HepG2 (cell line): ENCODE measurements at regions of chr2 and their contacts with region 1.

Region 1: DNA sequence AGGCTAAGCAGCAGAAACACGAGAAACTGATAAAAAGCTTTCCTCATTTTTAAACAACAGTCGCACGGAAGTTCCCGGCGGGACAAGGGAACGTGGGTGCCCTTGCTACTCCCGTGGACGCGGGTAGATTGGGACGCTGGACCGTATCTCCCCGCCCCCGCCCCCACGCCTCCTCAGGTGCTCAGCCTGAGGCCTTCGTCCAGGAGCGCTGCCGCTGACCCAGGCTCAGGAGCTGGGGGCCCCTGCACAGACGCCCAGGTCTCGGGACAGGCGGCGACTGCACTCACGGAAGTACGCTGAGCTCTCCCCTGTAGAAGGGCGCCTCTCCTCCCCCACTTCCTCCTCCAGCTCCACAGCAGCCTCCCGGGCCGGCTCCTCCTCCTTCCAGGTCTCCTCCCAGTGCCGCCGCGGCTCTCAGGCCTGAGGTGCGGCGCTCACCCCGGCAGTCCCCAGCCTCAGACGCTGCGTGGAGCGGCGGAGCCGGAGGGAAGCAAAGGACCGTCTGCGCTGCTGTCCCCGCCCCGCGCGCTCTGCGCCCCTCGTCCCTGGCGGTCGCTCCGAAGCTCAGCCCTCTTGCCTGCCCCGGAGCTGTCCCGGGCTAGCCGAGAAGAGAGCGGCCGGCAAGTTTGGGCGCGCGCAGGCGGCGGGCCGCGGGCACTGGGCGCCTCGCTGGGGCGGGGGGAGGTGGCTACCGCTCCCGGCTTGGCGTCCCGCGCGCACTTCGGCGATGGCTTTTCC is at the start of gene ITGAV:
- DNase-seq: peak; percentile 93
- ATAC-seq: peak; percentile 97
- H3K4me3 ChIP-seq: peak within 1 kb of the TSS; percentile 92 to 97 (median 95)
- H3K27ac ChIP-seq: peak within 1 kb of the TSS; percentile 89
- H3K4me1 ChIP-seq: peaks cover 46% of the 10 kb centered on the region
- H3K27me3 ChIP-seq: no peaks in the 10 kb centered on the region; a peak in 2 of 5 replicates
- CTCF ChIP-seq: peak; percentile 55
- EP300 ChIP-seq: 0 out of 4 replicates have a peak, but pooled peaks of 1 of the 2 experiments have one; percentile 21
- POLR2A ChIP-seq: peak; percentile 92 to 96
- RAD21 ChIP-seq: peak; percentile 73
- total RNA-seq, gene ITGAV: 35.8 and 60.4 TPM in 2 replicates

Region 2: DNA sequence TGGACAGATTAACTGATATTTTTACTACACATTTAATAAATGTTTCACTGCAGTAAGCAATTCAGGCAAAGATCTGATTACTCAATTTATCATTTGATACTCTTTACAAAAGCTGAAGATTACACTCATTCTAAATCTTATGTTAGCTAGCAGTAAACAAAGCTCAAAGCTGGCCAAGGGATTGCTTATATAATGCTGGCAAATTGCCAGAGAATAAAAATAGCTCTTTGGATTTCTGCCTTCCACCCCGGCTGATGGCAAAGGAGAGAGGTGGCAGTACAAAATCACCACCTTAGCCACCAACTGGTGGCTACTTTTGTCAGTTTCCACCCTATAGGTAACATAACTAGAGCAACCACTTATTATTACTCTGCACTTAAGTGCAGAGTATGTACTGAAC is 530.7 kb before region 1 on chr2:
- CTCF ChIA-PET with region 1: no interaction called
- POLR2A ChIA-PET with region 1: no interaction called
- in situ Hi-C with region 1: no loop called
- intact Hi-C with region 1: no loop called
- DNase-seq: no peak
- ATAC-seq: no peak
- H3K4me3 ChIP-seq: no peak overlapping the region
- H3K27ac ChIP-seq: no peak overlapping the region
- H3K4me1 ChIP-seq: no peaks in the 10 kb centered on the region
- H3K27me3 ChIP-seq: no peaks in the 10 kb centered on the region
- CTCF ChIP-seq: no peak
- EP300 ChIP-seq: no peak
- POLR2A ChIP-seq: no peak
- RAD21 ChIP-seq: no peak

Region 3: GRCh38 chr2:186485871-186486650 is 103.7 kb before region 1 on chr2 and contains the start of gene ZC3H15:
- CTCF ChIA-PET with region 1: no interaction called
- POLR2A ChIA-PET with region 1: interaction called, 48 read pairs
- in situ Hi-C with region 1: no loop called
- intact Hi-C with region 1: loop called (anchors 2 kb)
- DNase-seq: peak; percentile 98
- ATAC-seq: peak; percentile 92
- H3K4me3 ChIP-seq: peak within 1 kb of the TSS; percentile 67 to 91 (median 90)
- H3K27ac ChIP-seq: peak within 1 kb of the TSS; percentile 88
- H3K4me1 ChIP-seq: peaks cover 51% of the 10 kb centered on the region
- H3K27me3 ChIP-seq: no peaks in the 10 kb centered on the region; a peak in 1 of 5 replicates
- CTCF ChIP-seq: no peak; the same call in 1 of the 2 replicates
- EP300 ChIP-seq: 0 out of 4 replicates have a peak, but pooled peaks have one; percentile 8 to 48
- POLR2A ChIP-seq: peak; percentile 94 to 98
- RAD21 ChIP-seq: peak; percentile 60
- total RNA-seq, gene ZC3H15: 168 and 286 TPM in 2 replicates

Region 4: DNA sequence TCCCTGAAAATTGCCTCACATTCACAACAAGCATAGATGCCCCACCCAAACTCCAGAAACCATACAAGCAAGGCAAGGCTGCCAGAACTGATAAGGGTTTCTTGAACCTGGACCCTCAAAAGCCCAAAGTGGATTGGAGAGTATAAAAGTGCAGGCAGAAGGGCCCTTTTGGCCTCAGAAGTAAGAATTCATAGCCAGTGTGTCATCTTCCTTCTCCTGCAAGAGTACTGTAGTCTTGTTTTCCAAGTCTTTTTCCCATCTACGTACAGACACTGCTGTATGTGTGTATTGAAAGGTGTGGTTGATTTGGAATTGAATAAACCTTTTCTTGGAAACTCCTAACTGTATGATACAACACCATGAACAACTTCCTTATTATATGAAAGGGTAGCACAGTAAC is 56.9 kb before region 1 on chr2:
- CTCF ChIA-PET with region 1: no interaction called
- POLR2A ChIA-PET with region 1: interaction called, 25 read pairs
- in situ Hi-C with region 1: no loop called
- intact Hi-C with region 1: loop called (anchors 1 kb)
- DNase-seq: no peak
- ATAC-seq: no peak
- H3K4me3 ChIP-seq: no peak overlapping the region
- H3K27ac ChIP-seq: peak overlapping the region; percentile 47
- H3K4me1 ChIP-seq: peaks cover 52% of the 10 kb centered on the region
- H3K27me3 ChIP-seq: no peaks in the 10 kb centered on the region
- CTCF ChIP-seq: no peak
- EP300 ChIP-seq: no peak
- POLR2A ChIP-seq: no peak
- RAD21 ChIP-seq: no peak

Region 5: DNA sequence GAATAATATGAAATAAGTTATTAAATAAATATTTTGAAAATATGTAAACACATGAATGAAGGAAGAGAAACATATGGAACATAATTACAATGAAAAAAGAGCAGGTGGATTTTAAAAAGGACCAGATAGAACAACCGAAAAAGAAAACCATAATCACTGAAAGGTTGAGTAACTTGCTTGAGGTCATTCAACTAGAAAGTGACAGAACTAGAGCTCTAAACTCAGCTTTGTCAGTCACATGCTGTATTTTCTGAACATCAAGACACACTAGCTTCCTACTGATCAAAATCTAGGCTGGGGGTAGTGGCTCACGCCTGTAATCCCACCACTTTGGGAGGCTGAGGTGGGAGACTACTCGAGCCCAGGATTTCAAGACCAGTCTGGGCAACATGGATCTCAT is 29.9 kb before region 1 on chr2:
- CTCF ChIA-PET with region 1: no interaction called
- POLR2A ChIA-PET with region 1: interaction called, 24 read pairs
- in situ Hi-C with region 1: no loop called
- intact Hi-C with region 1: no loop called
- DNase-seq: no peak
- ATAC-seq: no peak
- H3K4me3 ChIP-seq: no peak overlapping the region
- H3K27ac ChIP-seq: no peak overlapping the region
- H3K4me1 ChIP-seq: peaks cover 20% of the 10 kb centered on the region
- H3K27me3 ChIP-seq: no peaks in the 10 kb centered on the region
- CTCF ChIP-seq: no peak
- EP300 ChIP-seq: no peak
- POLR2A ChIP-seq: no peak
- RAD21 ChIP-seq: no peak

Region 6: GRCh38 chr2:186641807-186642321 is 52.1 kb after region 1 on chr2:
- CTCF ChIA-PET with region 1: no interaction called
- POLR2A ChIA-PET with region 1: no interaction called
- in situ Hi-C with region 1: no loop called
- intact Hi-C with region 1: loop called (anchors 2 kb)
- DNase-seq: peak; percentile 75
- ATAC-seq: peak; percentile 98
- H3K4me3 ChIP-seq: no peak overlapping the region
- H3K27ac ChIP-seq: no peak overlapping the region
- H3K4me1 ChIP-seq: no peaks in the 10 kb centered on the region
- H3K27me3 ChIP-seq: no peaks in the 10 kb centered on the region
- CTCF ChIP-seq: peak; percentile 88
- EP300 ChIP-seq: no peak
- POLR2A ChIP-seq: no peak
- RAD21 ChIP-seq: peak; percentile 88